Activated naive CD4-positive, alpha-beta T cell treated with anti-CD3 and anti-CD28 coated beads for 36 hours (primary cell): ENCODE measurements at regions of chr10 and their contacts with region 1.

Region 1: DNA sequence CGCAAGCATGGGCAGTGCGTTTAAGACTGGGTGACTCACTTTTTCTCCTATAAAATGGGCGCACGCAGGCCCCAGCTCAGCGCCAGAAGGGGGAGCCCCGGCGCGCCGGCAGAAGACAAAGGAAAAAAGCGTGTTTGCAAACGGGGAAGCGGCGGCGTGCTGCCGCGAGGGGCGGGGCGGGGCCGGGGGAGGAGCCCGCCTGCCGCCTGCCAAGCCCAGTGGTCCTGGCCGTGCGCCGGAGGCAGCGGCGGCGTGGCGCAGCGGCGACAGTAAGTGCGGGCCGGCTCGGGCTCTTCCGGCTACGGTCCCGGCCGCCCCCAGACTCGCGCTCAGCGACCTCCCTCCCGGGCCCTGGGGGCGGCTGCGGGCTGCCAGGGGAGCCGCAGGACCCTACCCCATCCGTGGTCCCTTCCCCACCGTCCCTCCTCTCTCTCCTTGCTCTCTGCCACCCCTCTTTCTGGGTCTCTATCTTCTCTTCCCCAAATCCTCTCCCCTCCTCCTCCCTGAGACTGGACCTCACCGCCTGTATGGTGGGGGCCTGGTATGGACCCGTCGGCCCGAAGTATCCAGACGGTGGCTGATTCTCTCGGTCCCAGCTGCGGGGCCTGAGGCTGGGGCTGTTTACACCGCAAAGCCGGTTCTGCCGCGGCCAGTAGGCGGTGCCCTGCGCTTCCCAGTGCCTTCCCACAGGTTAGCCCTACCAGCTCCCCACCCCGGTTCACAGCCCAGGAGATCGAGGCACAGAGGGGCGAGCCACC is at the start of gene SLC29A3:
- DNase-seq: peak; percentile 92
- H3K4me3 Mint-ChIP-seq: peak within 1 kb of the TSS; percentile 93
- H3K27ac Mint-ChIP-seq: peak within 1 kb of the TSS; percentile 18
- H3K4me1 Mint-ChIP-seq: peaks cover 35% of the 10 kb centered on the region
- H3K27me3 Mint-ChIP-seq: no peaks in the 10 kb centered on the region
- total RNA-seq, gene SLC29A3: 1.2 to 1.5 TPM

Region 2: DNA sequence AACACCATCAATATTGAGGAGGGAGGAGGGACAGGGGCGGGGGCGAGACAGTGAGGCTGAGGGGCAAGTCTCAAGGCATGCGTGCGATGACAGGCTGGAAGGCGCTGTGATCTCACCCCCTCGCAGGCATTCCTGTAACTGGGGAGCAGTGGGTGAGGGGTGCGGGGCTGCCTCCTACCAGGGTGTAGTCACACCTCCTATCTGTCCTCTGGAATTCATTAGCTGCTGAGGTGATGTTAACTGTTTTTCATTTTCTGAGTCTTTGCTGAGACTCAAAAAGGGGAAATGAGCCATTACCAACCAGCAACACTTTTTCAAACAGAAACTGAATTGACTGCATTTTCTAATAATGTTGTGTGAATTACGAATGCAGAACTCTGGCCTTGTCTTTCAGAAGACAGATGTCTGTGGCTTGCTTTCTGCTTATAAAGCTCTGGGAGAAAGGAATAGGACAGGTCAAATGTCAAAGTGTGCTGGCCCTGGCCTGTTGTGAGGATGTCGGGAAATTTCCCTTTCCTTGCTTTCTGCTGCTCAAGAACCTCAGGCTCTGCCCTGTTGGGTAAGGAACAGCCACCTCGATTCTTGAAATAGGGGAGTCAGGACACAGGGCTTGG is 53.8 kb after region 1 on chr10:
- CTCF ChIA-PET with region 1: interaction called, 18 read pairs
- intact Hi-C with region 1: loop called (anchors 1 kb)
- DNase-seq: no peak
- H3K4me3 Mint-ChIP-seq: no peak overlapping the region
- H3K27ac Mint-ChIP-seq: no peak overlapping the region
- H3K4me1 Mint-ChIP-seq: peaks cover 4% of the 10 kb centered on the region
- H3K27me3 Mint-ChIP-seq: no peaks in the 10 kb centered on the region

Region 3: GRCh38 chr10:71378336-71379117 is 59.3 kb after region 1 on chr10:
- CTCF ChIA-PET with region 1: interaction called, 18 read pairs
- intact Hi-C with region 1: loop called (anchors 1 kb)
- DNase-seq: no peak
- H3K4me3 Mint-ChIP-seq: no peak overlapping the region
- H3K27ac Mint-ChIP-seq: no peak overlapping the region
- H3K4me1 Mint-ChIP-seq: peaks cover 4% of the 10 kb centered on the region
- H3K27me3 Mint-ChIP-seq: no peaks in the 10 kb centered on the region

Region 4: DNA sequence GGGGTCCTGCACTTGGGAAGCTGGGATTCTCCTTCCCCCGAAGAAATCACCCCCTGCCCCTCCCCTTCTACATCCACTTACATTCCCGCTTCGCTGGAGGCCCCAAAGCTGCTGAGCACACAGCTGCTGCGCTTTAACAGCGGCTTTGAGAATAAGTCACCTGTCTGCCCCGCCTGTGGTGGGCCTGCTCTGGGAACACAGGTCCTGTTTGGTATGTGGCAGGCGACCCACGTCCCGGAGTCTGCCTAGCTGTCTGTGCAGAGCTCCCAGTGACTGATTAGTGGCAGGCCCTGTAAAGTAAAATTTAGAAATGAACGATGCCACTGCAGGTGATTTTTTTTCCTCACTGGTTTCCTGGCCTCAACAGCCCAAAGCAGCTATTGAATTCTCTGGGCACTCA is 124.5 kb after region 1 on chr10:
- CTCF ChIA-PET with region 1: no interaction called
- intact Hi-C with region 1: no loop called
- DNase-seq: no peak
- H3K4me3 Mint-ChIP-seq: no peak overlapping the region
- H3K27ac Mint-ChIP-seq: no peak overlapping the region
- H3K4me1 Mint-ChIP-seq: no peaks in the 10 kb centered on the region
- H3K27me3 Mint-ChIP-seq: no peaks in the 10 kb centered on the region

Region 5: GRCh38 chr10:71899665-71900412 is 580.6 kb after region 1 on chr10:
- CTCF ChIA-PET with region 1: no interaction called
- intact Hi-C with region 1: loop called (anchors 5 kb)
- DNase-seq: no peak
- H3K4me3 Mint-ChIP-seq: no peak overlapping the region
- H3K27ac Mint-ChIP-seq: no peak overlapping the region
- H3K4me1 Mint-ChIP-seq: peaks cover 11% of the 10 kb centered on the region
- H3K27me3 Mint-ChIP-seq: no peaks in the 10 kb centered on the region

Region 6: DNA sequence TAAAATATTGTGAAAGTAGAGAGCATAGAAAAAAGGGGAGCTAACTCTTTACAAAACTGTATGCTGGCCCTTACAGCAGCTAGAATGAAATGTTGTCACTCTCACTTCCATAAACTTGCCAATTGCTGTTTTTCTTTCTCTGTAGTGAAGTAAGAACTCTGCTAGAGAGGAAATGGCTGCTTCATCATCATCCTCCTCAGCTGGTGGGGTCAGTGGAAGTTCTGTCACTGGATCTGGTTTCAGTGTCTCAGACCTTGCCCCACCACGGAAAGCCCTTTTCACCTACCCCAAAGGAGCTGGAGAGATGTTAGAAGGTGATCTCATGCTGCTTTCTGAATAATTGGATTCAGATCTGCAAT is 904.5 kb after region 1 on chr10:
- CTCF ChIA-PET with region 1: no interaction called
- intact Hi-C with region 1: no loop called
- DNase-seq: peak; percentile 44
- H3K4me3 Mint-ChIP-seq: no peak overlapping the region
- H3K27ac Mint-ChIP-seq: peak overlapping the region; percentile 89
- H3K4me1 Mint-ChIP-seq: peaks cover 63% of the 10 kb centered on the region
- H3K27me3 Mint-ChIP-seq: no peaks in the 10 kb centered on the region